Activated CD4-positive, alpha-beta T cell treated with anti-CD3 and anti-CD28 coated beads for 36 hours (primary cell): ENCODE measurements at regions of chr9 and their contacts with region 1.

Region 1: DNA sequence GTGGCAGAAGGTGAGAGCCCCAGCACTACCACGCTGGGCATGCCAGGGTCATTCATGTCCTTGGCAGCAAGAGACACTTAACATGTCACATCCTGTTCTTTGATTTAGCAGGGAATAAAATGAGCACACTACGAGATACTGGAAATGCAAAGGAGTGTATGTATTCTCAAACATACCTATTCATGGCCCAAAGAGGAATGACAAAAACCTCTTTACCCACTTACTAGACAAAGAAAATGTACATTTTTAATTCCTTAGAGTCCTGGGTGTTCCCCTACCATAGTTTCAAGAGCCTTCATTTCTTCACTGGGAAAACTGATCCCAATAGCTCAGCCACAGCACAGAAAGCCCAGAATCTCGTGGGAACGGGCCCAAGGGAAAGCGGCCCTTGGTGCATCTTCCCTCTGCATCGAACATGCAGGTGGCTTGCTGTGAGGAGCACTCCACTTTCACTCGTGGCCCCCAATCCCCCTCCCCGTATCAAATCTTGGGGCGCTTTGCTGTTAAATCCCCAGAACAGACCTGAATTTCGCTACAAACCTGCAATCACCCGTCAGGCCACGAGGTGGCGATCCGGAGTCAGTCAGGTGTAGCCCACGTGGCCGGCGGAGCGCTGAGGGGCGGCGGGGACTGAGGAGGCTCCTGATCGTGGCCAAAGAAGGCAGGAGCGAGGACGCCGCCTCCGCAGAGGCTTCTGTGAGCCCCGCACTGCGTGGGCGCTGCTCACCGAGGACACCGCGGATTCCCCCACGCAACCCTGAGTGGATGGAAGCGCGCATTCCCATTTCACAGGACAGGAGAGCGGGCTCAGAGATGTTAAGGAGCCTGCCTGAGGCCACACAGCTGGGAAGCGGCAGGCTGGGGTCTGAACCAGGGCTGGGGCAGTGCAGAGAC is 91.4 kb downstream of the LMX1B start:
- DNase-seq: peak; percentile 92
- ATAC-seq: peak; percentile 75
- H3K4me3 Mint-ChIP-seq: peak overlapping the region; percentile 29
- H3K27ac Mint-ChIP-seq: no peak overlapping the region
- H3K4me1 Mint-ChIP-seq: peaks cover 19% of the 10 kb centered on the region
- H3K27me3 Mint-ChIP-seq: peaks cover 24% of the 10 kb centered on the region

Region 2: GRCh38 chr9:125706661-125707471 is 998.3 kb before region 1 on chr9 and contains the start of gene MAPKAP1:
- CTCF ChIA-PET with region 1: no interaction called
- POLR2A ChIA-PET with region 1: no interaction called
- intact Hi-C with region 1: no loop called
- DNase-seq: peak; percentile 97
- ATAC-seq: peak; percentile 100
- H3K4me3 Mint-ChIP-seq: peak within 1 kb of the TSS; percentile 86
- H3K27ac Mint-ChIP-seq: peak within 1 kb of the TSS; percentile 83
- H3K4me1 Mint-ChIP-seq: peaks cover 44% of the 10 kb centered on the region
- H3K27me3 Mint-ChIP-seq: no peaks in the 10 kb centered on the region
- total RNA-seq, gene MAPKAP1: 51.6 to 61.9 TPM

Region 3: DNA sequence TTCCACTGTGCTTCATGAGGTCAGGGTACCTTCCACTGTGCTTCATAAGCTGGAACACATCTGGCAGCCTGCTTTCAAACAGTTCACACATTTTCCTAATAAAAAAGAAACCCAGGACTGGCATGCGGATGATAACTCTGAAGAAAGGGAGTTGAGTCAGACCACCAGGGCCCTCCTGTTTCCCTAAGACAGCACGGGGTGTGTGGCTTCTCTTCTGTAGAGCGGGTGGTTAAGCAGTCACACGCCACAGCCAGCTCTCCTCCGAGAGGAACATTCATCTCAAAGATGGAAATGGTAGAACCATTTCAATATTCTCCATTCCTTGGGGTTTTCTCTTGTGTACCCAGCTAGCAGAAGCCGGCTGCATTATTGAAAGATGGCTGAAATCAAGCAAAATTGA is 219.5 kb before region 1 on chr9:
- CTCF ChIA-PET with region 1: no interaction called
- POLR2A ChIA-PET with region 1: no interaction called
- intact Hi-C with region 1: no loop called
- DNase-seq: no peak
- ATAC-seq: no peak
- H3K4me3 Mint-ChIP-seq: no peak overlapping the region
- H3K27ac Mint-ChIP-seq: no peak overlapping the region
- H3K4me1 Mint-ChIP-seq: peaks cover 16% of the 10 kb centered on the region
- H3K27me3 Mint-ChIP-seq: no peaks in the 10 kb centered on the region

Region 4: DNA sequence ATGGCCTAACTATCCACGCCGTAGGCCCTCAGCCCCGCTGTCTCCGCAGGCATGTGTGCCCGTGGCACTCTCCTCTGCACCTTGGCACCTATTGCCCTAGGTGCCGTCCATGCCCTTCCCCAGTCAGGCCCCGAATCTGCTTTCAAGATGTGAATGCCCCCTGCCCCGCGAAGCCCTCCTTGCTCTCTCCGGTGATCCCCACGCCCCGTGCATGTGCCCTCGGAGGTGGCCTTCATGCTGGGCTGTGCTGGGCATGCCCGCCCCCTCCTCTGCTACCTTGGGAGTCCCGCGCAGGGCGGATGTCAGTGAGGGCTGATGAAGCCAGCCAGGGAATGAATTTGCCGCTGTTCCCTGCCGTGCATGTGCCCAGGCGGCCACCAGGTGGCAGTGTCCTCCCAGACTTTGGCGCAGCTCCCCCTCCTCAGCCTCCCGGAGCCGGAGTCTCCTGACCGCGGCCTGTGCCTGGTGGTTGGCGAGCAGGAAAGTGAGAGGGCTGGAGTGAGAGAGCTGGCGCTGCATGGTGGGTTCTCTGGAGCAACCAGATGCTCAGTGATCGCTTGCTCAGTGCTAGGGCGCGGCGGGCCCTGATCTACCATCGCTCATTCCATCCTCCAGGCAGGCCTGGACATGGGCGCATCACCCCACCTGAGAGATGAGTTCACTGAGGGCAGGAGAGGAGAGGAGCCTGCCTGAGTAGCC is 204.3 kb before region 1 on chr9:
- CTCF ChIA-PET with region 1: no interaction called
- POLR2A ChIA-PET with region 1: no interaction called
- intact Hi-C with region 1: no loop called
- DNase-seq: peak; percentile 83
- ATAC-seq: peak; percentile 87
- H3K4me3 Mint-ChIP-seq: no peak overlapping the region
- H3K27ac Mint-ChIP-seq: no peak overlapping the region
- H3K4me1 Mint-ChIP-seq: peaks cover 5% of the 10 kb centered on the region
- H3K27me3 Mint-ChIP-seq: peaks cover 8% of the 10 kb centered on the region

Region 5: GRCh38 chr9:126676685-126677143 is 28.4 kb before region 1 on chr9:
- CTCF ChIA-PET with region 1: interaction called, 17 read pairs
- POLR2A ChIA-PET with region 1: no interaction called
- intact Hi-C with region 1: no loop called
- DNase-seq: peak; percentile 30
- ATAC-seq: no peak
- H3K4me3 Mint-ChIP-seq: no peak overlapping the region
- H3K27ac Mint-ChIP-seq: no peak overlapping the region
- H3K4me1 Mint-ChIP-seq: peaks cover 12% of the 10 kb centered on the region
- H3K27me3 Mint-ChIP-seq: peaks cover 63% of the 10 kb centered on the region

Region 6: DNA sequence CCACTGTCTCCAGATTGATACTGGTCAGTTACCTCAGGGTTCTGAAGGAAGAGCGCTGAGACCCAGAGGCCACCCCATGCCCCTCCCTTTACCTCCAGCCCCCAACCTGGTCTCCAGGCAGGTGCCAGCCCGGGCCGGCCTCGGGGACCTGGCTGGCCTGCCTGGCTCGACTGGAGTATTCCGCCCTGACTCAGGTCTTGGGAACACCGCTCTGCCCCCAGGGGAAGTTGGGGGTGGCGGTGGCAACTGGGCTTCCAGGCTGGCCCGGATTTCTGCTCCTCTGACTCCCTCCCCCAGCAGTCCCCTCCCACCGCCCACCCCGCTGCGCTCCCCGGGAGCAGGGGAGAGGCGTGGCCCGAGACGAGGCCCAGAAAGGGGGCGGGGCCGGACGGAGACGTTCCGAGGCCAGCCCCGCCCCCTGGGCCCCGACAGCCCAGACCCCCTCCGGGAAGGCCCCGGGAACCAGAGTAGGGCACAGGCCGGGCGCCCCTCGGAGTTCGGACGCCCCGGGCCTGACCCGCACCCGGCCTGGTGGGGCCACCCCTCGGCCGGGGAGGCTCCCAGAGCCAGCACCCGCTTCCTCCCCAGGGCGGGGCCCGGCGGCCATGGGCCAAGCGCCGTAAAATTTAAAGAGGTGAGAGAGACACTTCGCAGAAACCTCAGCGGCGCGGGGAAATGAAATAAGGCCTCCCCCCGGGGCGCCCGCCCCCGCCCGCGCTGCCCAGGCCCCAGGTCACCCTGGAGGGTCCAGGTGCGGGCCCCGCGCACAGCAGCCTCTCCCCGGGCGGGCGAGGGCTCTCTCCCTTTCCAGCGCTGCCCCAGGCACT is 17.3 kb after region 1 on chr9:
- CTCF ChIA-PET with region 1: interaction called, 31 read pairs
- POLR2A ChIA-PET with region 1: interaction called, 3 read pairs
- intact Hi-C with region 1: loop called in 1 of 2 experiments (anchors 1 kb)
- DNase-seq: peak; percentile 96
- ATAC-seq: peak; percentile 73
- H3K4me3 Mint-ChIP-seq: peak overlapping the region; percentile 77
- H3K27ac Mint-ChIP-seq: peak overlapping the region; percentile 89
- H3K4me1 Mint-ChIP-seq: peaks cover 43% of the 10 kb centered on the region
- H3K27me3 Mint-ChIP-seq: no peaks in the 10 kb centered on the region

Region 7: GRCh38 chr9:126745574-126746411 is 40.7 kb after region 1 on chr9:
- CTCF ChIA-PET with region 1: interaction called, 18 read pairs
- POLR2A ChIA-PET with region 1: no interaction called
- intact Hi-C with region 1: no loop called
- DNase-seq: peak; percentile 45
- ATAC-seq: peak; percentile 76
- H3K4me3 Mint-ChIP-seq: no peak overlapping the region
- H3K27ac Mint-ChIP-seq: peak overlapping the region; percentile 44
- H3K4me1 Mint-ChIP-seq: peaks cover 25% of the 10 kb centered on the region
- H3K27me3 Mint-ChIP-seq: no peaks in the 10 kb centered on the region

Region 8: DNA sequence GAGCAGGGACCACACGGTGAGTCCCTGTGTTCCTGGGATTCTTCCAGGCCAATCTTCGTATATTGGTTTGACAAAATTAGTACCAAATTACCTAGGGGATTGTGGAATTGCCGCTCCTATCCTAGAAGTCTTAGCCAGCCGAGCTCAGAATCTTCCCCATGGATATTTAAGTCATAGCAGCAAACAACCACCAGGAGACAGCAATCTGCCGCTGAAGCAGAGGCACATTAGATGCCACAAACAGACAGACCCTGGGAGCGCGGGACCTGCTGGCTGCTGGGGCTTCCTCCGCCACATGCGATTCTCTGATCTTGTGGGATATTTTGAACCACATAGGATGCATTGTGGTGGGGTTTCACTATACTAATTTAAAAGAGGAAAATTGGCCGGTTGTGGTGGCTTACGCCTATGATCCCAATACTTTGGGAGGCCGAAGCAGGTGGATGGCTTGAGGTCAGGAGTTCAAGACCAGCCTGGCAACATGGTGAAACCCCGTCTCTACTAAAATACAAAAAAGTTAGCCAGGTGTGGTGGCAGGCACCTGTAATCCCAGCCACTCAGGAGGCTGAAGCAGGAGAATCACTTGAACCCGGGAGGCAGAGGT is 68.0 kb after region 1 on chr9:
- CTCF ChIA-PET with region 1: interaction called, 288 read pairs
- POLR2A ChIA-PET with region 1: no interaction called
- intact Hi-C with region 1: no loop called
- DNase-seq: peak; percentile 46
- ATAC-seq: peak; percentile 47
- H3K4me3 Mint-ChIP-seq: no peak overlapping the region
- H3K27ac Mint-ChIP-seq: no peak overlapping the region
- H3K4me1 Mint-ChIP-seq: no peaks in the 10 kb centered on the region
- H3K27me3 Mint-ChIP-seq: peaks cover 10% of the 10 kb centered on the region

Region 9: GRCh38 chr9:126791406-126792151 is 86.5 kb after region 1 on chr9:
- CTCF ChIA-PET with region 1: interaction called, 19 read pairs
- POLR2A ChIA-PET with region 1: no interaction called
- intact Hi-C with region 1: no loop called
- DNase-seq: no peak
- ATAC-seq: no peak
- H3K4me3 Mint-ChIP-seq: no peak overlapping the region
- H3K27ac Mint-ChIP-seq: no peak overlapping the region
- H3K4me1 Mint-ChIP-seq: no peaks in the 10 kb centered on the region
- H3K27me3 Mint-ChIP-seq: peaks cover 32% of the 10 kb centered on the region